ENCODE measurements at regions of chr17 and their contacts with region 1.

Region 1: DNA sequence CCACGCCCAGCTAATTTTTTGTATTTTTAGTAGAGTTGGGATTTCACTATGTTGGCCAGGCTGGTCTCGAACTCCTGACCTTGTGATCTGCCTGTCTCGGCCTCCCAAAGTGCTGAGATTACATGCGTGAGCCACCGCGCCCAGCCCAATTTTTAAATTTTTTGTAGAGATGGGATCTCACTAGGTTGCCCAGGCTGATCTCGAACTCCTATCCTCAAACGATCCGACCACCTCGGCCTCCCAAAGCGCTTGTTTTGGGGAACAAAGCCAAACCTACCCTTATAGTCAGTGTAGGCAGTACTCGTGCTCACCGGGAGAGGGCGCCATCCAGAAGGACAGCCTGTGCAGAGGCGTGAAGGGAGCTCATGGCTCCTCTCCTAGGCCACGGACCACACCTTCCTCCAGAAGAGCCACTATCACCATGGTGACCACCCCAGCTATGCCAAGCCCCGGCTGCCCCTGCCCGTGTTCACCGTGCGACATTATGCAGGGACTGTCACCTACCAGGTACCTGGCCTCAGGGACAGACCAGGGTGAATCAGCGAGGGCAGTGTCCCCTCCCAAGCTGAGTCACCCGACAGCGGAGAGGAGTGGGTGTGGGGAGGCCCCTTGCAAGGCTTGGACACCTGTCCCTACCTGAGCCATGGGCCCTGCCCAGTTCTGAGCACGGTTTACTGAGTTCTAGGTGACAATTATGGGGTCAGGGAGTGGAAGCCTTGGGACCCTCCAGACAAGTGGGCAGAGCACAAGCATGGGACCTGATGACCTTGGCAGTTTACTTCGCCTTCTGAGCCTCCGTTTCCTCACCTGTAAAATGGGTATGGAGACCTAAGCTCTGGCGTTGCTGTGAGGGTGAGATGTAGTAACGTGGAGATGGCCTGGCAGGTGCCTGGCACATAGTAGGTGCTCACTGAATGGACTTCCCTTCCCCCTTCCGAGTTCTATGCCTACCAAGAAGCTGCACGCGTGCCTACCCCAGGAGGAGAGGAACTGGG is 13.8 kb downstream of the MYO15B start:
- DNase-seq: peak; percentile 89

Region 2: DNA sequence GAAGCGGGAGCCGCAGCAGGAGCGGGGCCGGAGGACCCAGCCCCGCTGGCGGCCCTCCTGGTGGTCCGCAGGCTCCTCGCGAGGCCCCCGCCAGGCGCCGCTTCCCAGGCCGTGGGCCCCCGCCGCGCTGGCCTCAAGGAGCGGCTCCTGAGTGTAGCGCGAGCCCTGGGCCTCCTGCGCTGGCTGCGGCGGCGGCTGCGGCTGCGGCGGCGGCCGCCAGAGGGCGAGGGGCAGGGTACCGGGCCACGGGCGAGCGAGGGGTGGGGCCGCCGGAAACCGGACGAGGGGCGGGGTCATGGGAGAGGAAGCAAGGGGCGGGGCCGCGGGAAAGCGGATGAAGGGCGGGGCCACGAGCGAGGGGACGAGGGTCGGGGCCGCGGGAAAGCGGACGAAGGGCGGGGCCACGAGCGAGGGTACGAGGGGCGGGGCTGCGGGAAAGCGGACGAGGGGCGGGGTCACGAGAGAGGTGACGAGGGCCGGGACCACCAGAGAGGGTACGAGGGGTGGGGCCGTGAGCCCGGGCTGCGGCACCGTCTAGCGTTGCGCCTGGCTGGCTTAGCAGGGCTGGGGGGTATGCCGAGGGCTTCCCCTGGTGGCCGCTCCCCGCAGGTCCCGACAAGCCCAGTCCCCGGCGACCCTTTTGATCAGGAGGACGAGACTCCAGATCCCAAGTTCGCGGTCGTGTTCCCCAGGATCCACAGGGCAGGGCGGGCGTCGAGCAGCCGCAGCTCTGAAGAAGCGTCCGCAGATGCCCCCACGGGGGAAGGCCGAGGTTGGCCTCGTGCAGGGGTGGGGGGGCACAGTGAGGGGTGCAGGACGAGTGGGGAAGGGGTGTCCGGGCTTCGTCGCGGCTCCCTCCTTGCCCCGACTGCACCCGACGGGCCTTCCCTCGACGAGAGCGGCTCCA is 12.1 kb before region 1 on chr17:
- CTCF ChIA-PET with region 1: interaction called, 20 read pairs
- POLR2A ChIA-PET with region 1: interaction called, 8 read pairs
- DNase-seq: peak; percentile 100

Region 3: GRCh38 chr17:75614006-75614405 is 12.7 kb after region 1 on chr17:
- CTCF ChIA-PET with region 1: interaction called, 16 read pairs
- POLR2A ChIA-PET with region 1: interaction called, 3 read pairs
- DNase-seq: peak; percentile 74

Region 4: DNA sequence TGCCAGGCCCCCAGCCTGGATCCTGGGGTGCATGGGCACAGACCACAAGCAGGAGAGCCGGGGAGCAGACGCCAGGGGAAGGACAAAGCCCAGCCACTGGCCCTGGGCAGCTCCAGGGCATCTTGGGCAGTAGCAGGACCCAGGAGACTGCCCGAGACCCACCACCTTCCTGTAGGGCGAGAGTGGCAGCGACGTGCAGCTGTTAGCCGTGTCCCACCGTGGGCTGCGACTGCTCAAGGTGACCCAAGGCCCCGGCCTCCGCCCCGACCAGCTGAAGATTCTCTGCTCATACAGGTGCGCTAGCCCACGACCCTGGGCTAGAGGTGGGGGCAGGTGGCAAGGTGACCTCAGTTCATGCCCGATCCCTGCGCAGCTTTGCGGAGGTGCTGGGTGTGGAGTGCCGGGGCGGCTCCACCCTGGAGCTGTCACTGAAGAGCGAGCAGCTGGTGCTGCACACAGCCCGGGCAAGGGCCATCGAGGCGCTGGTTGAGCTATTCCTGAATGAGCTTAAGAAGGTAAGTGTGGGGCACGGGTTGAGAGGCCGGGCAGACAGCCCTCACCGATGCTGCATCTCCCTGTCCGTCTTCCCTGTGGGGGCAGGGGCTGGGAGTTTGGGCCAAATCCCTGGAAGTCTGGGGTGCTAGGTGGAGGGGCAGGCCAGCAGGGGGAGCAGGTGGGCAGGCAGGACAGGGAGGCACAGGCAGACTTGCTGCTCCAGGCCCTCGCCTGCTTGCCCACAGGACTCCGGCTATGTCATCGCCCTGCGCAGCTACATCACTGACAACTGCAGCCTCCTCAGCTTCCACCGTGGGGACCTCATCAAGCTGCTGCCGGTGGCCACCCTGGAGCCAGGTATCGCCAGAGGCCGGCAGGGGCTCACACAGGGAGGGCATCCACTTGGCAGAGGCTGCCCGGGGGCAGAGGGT is 18.4 kb after region 1 on chr17:
- CTCF ChIA-PET with region 1: interaction called, 26 read pairs
- POLR2A ChIA-PET with region 1: interaction called, 3 read pairs
- DNase-seq: peak; percentile 61

Region 5: GRCh38 chr17:75625813-75626486 is 24.6 kb after region 1 on chr17:
- CTCF ChIA-PET with region 1: interaction called, 26 read pairs
- POLR2A ChIA-PET with region 1: interaction called, 3 read pairs
- DNase-seq: peak; percentile 80